Caco-2 (cell line): ENCODE measurements at regions of chr5 and their contacts with region 1.

Region 1: GRCh38 chr5:106140101-106140500 is 1530.6 kb downstream of the EFNA5 start:
- DNase-seq: no peak
- H3K4me3 ChIP-seq: no peak overlapping the region
- H3K4me3 Mint-ChIP-seq: no peak overlapping the region
- H3K27ac Mint-ChIP-seq: no peak overlapping the region
- H3K4me1 ChIP-seq: peaks cover 11% of the 10 kb centered on the region; the same call in 1 of the 2 replicates
- H3K4me1 Mint-ChIP-seq: peaks cover 15% of the 10 kb centered on the region
- H3K27me3 ChIP-seq: no peaks in the 10 kb centered on the region
- H3K27me3 Mint-ChIP-seq: no peaks in the 10 kb centered on the region
- CTCF ChIP-seq: no peak

Region 2: DNA sequence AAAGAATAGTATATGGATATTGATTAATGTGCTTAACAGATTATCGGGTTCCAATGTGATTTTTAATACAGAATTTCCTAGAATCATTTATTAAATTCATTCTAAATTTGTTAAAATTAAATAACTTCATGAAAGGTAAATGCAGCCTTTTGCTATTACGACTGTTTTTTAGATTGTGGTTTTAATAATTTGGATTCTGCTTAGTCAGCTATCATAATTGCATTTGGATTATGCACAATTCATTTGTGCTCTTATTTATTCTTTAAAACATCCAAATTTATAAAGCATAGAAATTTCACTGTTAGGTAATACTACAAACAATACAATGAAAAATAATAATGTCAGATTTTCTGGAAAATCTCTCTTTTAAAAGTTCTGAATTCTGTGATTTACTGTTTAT is 67.9 kb before region 1 on chr5:
- CTCF ChIA-PET with region 1: no interaction called
- POLR2A ChIA-PET with region 1: no interaction called
- intact Hi-C with region 1: no loop called
- DNase-seq: no peak
- H3K4me3 ChIP-seq: no peak overlapping the region
- H3K4me3 Mint-ChIP-seq: no peak overlapping the region
- H3K27ac Mint-ChIP-seq: no peak overlapping the region
- H3K4me1 ChIP-seq: no peaks in the 10 kb centered on the region
- H3K4me1 Mint-ChIP-seq: no peaks in the 10 kb centered on the region
- H3K27me3 ChIP-seq: no peaks in the 10 kb centered on the region
- H3K27me3 Mint-ChIP-seq: no peaks in the 10 kb centered on the region
- CTCF ChIP-seq: no peak

Region 3: GRCh38 chr5:106127341-106127781 is 12.7 kb before region 1 on chr5:
- CTCF ChIA-PET with region 1: no interaction called
- POLR2A ChIA-PET with region 1: no interaction called
- intact Hi-C with region 1: loop called (anchors 1 kb)
- DNase-seq: peak in 1 of 2 experiments; percentile 42
- H3K4me3 ChIP-seq: no peak overlapping the region
- H3K4me3 Mint-ChIP-seq: no peak overlapping the region
- H3K27ac Mint-ChIP-seq: peak overlapping the region; percentile 75
- H3K4me1 ChIP-seq: peaks cover 11% of the 10 kb centered on the region
- H3K4me1 Mint-ChIP-seq: peaks cover 8% of the 10 kb centered on the region
- H3K27me3 ChIP-seq: no peaks in the 10 kb centered on the region
- H3K27me3 Mint-ChIP-seq: no peaks in the 10 kb centered on the region
- CTCF ChIP-seq: no peak